Activated T-helper 1 cell treated with anti-CD3 and anti-CD28 coated beads, Interleukin-12 subunit alpha, Interleukin-12 subunit beta, Interleukin-2, Interleukin-4 antibody, amounts not matched to agents 30 ng/mL and 10 ng/mL and 1 ng/mL, durations not matched to agents 14 hours and 24 hours and 36 hours (primary cell): ENCODE measurements at regions of chr16 and their contacts with region 1.

Region 1: DNA sequence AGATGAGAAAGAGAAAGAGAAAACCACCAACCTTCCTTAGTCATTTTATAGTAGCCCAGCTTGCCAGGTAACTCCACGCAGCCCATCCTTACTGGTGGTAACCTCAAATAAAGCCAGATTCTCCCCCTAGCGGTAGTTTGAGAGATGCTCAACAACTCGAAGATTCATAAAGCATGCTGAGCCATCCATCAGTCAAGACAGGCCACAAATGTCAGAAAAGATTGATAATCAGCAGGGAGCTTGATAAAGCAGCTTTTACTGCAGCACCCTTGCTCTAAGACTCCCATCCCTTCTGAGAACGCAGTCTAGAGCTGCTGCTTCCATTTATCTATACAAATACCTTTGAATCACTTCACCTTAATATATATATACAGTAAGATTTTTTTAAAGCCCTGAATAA is 451.5 kb upstream of the HSBP1 start:
- DNase-seq: no peak
- H3K4me3 Mint-ChIP-seq: no peak overlapping the region
- H3K27ac Mint-ChIP-seq: no peak overlapping the region
- H3K4me1 Mint-ChIP-seq: no peaks in the 10 kb centered on the region
- H3K27me3 Mint-ChIP-seq: no peaks in the 10 kb centered on the region

Region 2: GRCh38 chr16:83296505-83296904 is 59.8 kb before region 1 on chr16:
- intact Hi-C with region 1: loop called (anchors 2 kb)
- DNase-seq: no peak
- H3K4me3 Mint-ChIP-seq: no peak overlapping the region
- H3K27ac Mint-ChIP-seq: no peak overlapping the region
- H3K4me1 Mint-ChIP-seq: no peaks in the 10 kb centered on the region
- H3K27me3 Mint-ChIP-seq: no peaks in the 10 kb centered on the region

Region 3: DNA sequence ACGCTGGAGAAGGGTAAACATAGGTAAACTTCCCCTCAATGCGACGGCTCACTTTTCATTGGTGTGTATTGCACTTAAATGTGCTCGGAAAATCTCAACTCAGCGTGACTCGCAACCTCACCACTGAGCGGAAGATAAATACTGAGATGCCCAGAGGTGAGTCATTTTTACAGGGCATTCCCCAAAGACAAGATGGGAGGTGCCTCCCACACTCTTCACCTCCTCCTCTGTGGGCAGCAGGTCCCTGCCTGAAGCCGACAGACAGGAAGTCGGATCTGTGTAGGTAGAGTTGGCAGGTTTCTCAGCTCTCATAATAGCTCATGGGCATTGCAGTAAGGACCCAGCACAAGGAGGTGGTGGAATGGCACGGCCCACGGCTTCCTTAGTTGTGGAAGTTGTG is 176.9 kb after region 1 on chr16:
- intact Hi-C with region 1: no loop called
- DNase-seq: no peak
- H3K4me3 Mint-ChIP-seq: no peak overlapping the region
- H3K27ac Mint-ChIP-seq: no peak overlapping the region
- H3K4me1 Mint-ChIP-seq: no peaks in the 10 kb centered on the region
- H3K27me3 Mint-ChIP-seq: no peaks in the 10 kb centered on the region

Region 4: GRCh38 chr16:84730406-84731037 is 1374.3 kb after region 1 on chr16:
- intact Hi-C with region 1: no loop called
- DNase-seq: no peak
- H3K4me3 Mint-ChIP-seq: no peak overlapping the region
- H3K27ac Mint-ChIP-seq: no peak overlapping the region
- H3K4me1 Mint-ChIP-seq: peaks cover 54% of the 10 kb centered on the region
- H3K27me3 Mint-ChIP-seq: no peaks in the 10 kb centered on the region